Naive thymus-derived CD4-positive, alpha-beta T cell (primary cell): ENCODE measurements at regions of chr15 and their contacts with region 1.

Region 1: DNA sequence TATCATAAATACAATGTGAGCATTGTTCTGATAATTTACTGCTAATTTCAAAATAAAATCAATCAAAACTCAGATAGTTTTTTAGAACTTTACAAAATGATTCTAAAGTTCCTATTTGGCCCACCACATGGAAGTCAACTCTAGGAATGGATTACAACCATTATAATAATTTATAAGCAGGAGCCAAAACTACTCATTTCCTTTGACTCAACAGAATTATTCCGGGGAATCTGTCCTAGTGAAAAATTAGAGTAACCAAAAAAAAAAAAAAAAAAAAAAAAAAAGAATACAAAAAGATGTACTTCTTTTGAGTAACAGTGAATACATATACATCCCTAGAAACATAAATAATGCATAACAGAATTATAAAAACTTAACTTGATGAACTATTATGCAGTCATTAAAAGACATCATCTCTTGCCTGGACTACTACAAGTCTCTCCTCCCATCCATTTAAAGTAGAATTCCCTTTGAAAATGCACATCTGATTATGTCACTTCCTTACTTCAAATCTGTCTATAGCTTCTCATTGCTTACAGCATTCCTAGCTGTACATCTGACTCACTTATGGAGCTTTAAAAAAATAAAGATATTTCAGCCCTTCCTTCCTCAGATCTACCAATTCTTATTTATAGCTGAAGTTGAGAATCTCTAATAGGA is 43.4 kb downstream of the HDGFL3 start:
- DNase-seq: no peak
- ATAC-seq: no peak
- H3K4me3 ChIP-seq: no peak overlapping the region
- H3K4me3 Mint-ChIP-seq: peak overlapping the region in 4 of 10 donors; percentile 35 to 85 (median 61)
- H3K27ac ChIP-seq: peak overlapping the region; percentile 26
- H3K27ac Mint-ChIP-seq: peak overlapping the region in 7 of 9 donors; percentile 22 to 97 (median 79)
- H3K4me1 ChIP-seq: no peaks in the 10 kb centered on the region
- H3K4me1 Mint-ChIP-seq: peaks cover 5 to 36% (median 21%) of the 10 kb centered on the region in 7 donors
- H3K27me3 ChIP-seq: no peaks in the 10 kb centered on the region
- H3K27me3 Mint-ChIP-seq: peaks cover 0 to 49% (median 18%) of the 10 kb centered on the region in 5 donors

Region 2: DNA sequence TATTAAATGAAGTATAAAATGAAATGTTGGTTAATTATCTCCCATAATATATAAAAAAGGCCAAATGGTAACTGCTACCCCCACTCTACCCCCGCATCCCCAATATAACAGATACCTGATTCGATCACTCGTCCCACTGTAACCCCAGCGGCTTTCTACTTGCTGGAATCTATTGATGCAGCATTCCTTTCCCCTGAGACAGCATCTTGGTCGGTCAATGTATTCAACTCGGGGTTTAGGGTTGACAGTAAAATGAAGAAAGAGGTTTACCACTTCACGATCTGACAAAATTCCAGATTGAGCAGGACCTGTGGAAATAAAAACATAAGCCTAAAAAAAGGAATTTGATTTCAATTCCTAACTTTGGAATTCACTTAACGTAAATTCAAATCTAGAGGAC is 134.2 kb before region 1 on chr15:
- CTCF ChIA-PET with region 1: no interaction called
- POLR2A ChIA-PET with region 1: no interaction called
- intact Hi-C with region 1: no loop called
- DNase-seq: no peak
- ATAC-seq: no peak
- H3K4me3 ChIP-seq: no peak overlapping the region
- H3K4me3 Mint-ChIP-seq: no peak overlapping the region
- H3K27ac ChIP-seq: no peak overlapping the region
- H3K27ac Mint-ChIP-seq: peak overlapping the region in 1 of 9 donors; percentile 61
- H3K4me1 ChIP-seq: no peaks in the 10 kb centered on the region
- H3K4me1 Mint-ChIP-seq: peaks cover 1 to 12% (median 8%) of the 10 kb centered on the region in 7 donors
- H3K27me3 ChIP-seq: no peaks in the 10 kb centered on the region
- H3K27me3 Mint-ChIP-seq: no peaks in the 10 kb centered on the region

Region 3: GRCh38 chr15:83108266-83109226 is 55.7 kb before region 1 on chr15:
- CTCF ChIA-PET with region 1: no interaction called
- POLR2A ChIA-PET with region 1: no interaction called
- intact Hi-C with region 1: loop called in 1 of 2 experiments (anchors 5 kb)
- DNase-seq: peak in 3 of 9 donors; percentile 15 to 30 (median 19)
- ATAC-seq: peak; percentile 89
- H3K4me3 ChIP-seq: peak overlapping the region; percentile 22
- H3K4me3 Mint-ChIP-seq: peak overlapping the region; percentile 68 to 97 (median 76)
- H3K27ac ChIP-seq: no peak overlapping the region
- H3K27ac Mint-ChIP-seq: peak overlapping the region in 1 of 9 donors; percentile 90
- H3K4me1 ChIP-seq: peaks cover 0 to 10% of the 10 kb centered on the region in 2 donors
- H3K4me1 Mint-ChIP-seq: peaks cover 11 to 38% (median 17%) of the 10 kb centered on the region in 7 donors
- H3K27me3 ChIP-seq: no peaks in the 10 kb centered on the region
- H3K27me3 Mint-ChIP-seq: peaks cover 21 to 59% (median 53%) of the 10 kb centered on the region in 5 donors

Region 4: GRCh38 chr15:83200162-83200561 is 35.9 kb after region 1 on chr15:
- CTCF ChIA-PET with region 1: no interaction called
- POLR2A ChIA-PET with region 1: no interaction called
- intact Hi-C with region 1: loop called in 1 of 2 experiments (anchors 1 kb)
- DNase-seq: peak in 1 of 9 donors; percentile 32
- ATAC-seq: peak; percentile 77
- H3K4me3 ChIP-seq: no peak overlapping the region
- H3K4me3 Mint-ChIP-seq: peak overlapping the region in 1 of 10 donors; percentile 24
- H3K27ac ChIP-seq: no peak overlapping the region
- H3K27ac Mint-ChIP-seq: peak overlapping the region in 1 of 9 donors; percentile 78
- H3K4me1 ChIP-seq: no peaks in the 10 kb centered on the region
- H3K4me1 Mint-ChIP-seq: peaks cover 0 to 44% (median 11%) of the 10 kb centered on the region in 7 donors
- H3K27me3 ChIP-seq: no peaks in the 10 kb centered on the region
- H3K27me3 Mint-ChIP-seq: peaks cover 0 to 46% (median 13%) of the 10 kb centered on the region in 5 donors

Region 5: DNA sequence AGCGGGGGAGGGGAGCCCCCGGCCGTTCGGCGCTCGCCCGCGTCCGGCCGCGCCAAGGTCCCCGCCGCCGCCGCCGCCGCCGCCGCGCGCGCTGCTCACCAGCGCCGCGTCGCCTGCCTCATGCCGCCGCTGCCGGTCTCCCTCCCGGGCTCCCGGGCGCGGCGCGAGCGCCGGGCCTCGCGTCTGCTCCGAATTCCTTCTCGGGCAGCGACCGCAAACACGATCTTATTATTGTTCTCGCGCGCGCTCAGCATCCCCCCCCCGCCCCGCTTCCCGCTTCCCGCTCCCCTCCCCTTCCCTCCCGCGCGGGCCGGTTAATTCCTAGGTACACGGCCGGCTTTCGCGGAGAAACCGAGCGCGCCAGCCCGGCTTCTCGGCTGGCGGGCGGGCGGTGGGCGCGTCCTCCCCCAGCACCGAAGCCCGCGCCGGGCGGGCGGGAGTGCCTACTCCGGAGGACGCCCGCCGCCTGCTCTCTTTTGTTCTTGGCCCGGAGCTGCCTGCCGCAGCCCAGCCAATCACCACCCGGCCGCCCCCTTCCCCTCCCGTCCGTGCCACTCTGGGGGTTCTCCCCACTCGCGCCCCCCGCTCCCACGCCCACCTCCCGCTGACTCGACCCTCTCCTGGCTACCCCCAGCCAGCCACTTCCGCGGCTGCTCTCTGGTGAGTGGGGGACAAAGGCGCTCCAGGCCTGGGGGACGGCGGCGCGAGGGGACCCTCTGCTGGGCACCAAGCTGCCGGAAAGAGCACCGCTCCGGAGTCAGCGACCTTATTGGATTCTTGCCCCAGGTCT is 43.6 kb after region 1 on chr15 and contains the start of gene HDGFL3:
- CTCF ChIA-PET with region 1: no interaction called
- POLR2A ChIA-PET with region 1: no interaction called
- intact Hi-C with region 1: loop called in 1 of 2 experiments (anchors 1 kb)
- DNase-seq: peak in 6 of 9 donors; percentile 5 to 53 (median 24)
- ATAC-seq: peak; percentile 55
- H3K4me3 ChIP-seq: no peak within 1 kb of the TSS
- H3K4me3 Mint-ChIP-seq: peak within 1 kb of the TSS; percentile 85 to 97 (median 93)
- H3K27ac ChIP-seq: peak within 1 kb of the TSS; percentile 51
- H3K27ac Mint-ChIP-seq: peak within 1 kb of the TSS in 5 of 9 donors; percentile 78 to 86 (median 85)
- H3K4me1 ChIP-seq: peaks cover 0 to 3% of the 10 kb centered on the region in 2 donors
- H3K4me1 Mint-ChIP-seq: peaks cover 0 to 18% (median 7%) of the 10 kb centered on the region in 7 donors
- H3K27me3 ChIP-seq: peaks cover 3% of the 10 kb centered on the region in 2 donors
- H3K27me3 Mint-ChIP-seq: peaks cover 14 to 37% (median 19%) of the 10 kb centered on the region in 5 donors
- total RNA-seq, gene HDGFL3: 2.1 to 50.1 (median 3.6) TPM